Mammary epithelial cell (primary cell): ENCODE measurements at regions of chr10 and their contacts with region 1.

Region 1: DNA sequence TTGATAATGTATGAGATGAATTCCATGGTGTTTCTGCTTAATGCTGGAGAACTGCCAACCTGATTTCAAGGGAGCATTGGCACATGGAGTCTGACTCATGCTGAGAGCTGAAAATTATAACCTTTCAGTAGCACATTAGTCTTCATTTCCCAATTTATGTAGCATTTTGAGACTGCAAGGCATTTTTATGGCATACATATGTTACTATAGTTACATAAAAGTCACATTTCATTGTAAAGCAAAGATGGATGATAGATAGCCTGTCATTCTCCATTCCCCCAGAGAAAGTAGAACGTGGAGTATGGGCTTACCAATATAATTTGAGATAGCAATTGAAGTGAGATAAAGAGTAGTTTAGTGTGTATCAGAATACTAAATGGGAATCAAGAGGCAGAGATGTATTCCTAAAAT is 103.1 kb downstream of the SLC16A9 start:
- DNase-seq: peak; percentile 28
- H3K4me3 ChIP-seq: no peak overlapping the region
- H3K27ac ChIP-seq: no peak overlapping the region
- H3K4me1 ChIP-seq: no peaks in the 10 kb centered on the region
- H3K27me3 ChIP-seq: no peaks in the 10 kb centered on the region
- CTCF ChIP-seq: no peak

Region 2: DNA sequence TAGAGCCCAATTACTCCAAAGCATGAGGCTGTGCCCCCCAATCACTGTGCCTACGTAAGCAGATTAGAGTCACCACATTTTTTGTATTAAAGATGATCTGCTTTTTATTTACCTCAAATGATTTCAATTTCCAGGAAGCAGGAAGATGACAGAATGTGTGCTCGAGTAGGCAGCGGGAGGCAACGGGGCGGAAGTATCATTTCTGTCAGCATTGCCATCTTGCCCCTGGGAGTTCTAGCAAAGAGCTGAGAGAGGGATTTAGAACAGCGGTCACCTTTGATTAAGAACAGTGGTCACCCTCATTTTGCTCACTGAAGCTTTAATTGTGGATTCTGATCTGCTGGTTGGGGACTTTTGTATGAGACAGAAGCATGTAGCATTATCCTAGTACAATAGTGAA is 127.1 kb before region 1 on chr10:
- CTCF ChIA-PET with region 1: no interaction called
- dilution Hi-C with region 1: no loop called
- in situ Hi-C with region 1: no loop called
- intact Hi-C with region 1: loop called (anchors 5 kb)
- DNase-seq: no peak
- H3K4me3 ChIP-seq: no peak overlapping the region
- H3K27ac ChIP-seq: no peak overlapping the region
- H3K4me1 ChIP-seq: no peaks in the 10 kb centered on the region
- H3K27me3 ChIP-seq: no peaks in the 10 kb centered on the region
- CTCF ChIP-seq: no peak

Region 3: DNA sequence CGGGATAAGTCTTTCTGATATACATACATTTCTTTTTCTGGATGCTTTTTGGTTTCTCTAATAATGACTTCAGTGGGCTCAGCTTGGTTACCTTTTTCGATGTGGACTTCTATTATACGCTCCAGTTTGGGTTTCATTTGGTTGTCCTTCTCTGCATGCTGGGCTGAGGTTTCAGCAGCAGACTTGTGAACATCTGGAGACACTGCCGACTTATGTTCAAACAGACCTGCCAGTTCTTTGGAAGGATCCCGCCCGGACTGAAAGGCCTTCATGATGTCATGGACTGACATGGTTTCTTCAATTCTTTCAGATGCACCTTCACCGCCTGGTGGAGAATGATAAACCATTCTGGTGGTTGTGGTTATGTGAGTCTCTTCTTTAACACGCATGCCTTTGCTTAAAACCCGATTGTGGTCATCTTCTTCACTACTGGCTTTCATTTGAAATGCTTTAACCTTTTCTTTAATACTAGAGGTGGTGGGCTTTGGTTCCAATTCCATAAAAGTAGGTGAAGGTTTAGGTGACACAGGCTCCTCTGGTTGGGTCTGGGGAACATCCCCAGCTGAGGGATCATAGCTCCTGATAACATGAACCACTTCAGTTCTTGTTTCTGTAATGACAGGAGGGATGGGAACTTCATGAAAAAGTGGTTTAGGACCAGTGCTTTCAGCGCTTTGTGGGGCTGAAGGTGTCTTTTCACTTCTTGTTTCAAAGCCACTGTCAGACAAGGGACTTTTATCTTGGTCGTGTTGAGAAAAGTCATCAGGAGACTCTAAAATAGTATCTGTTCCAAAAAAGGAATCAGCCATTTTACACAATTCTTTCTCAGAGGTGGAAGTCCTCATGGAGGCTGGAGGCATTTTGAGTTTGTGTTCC is 467.5 kb after region 1 on chr10:
- CTCF ChIA-PET with region 1: no interaction called
- dilution Hi-C with region 1: loop called (anchors 25 kb)
- in situ Hi-C with region 1: no loop called
- intact Hi-C with region 1: no loop called
- DNase-seq: no peak
- H3K4me3 ChIP-seq: no peak overlapping the region
- H3K27ac ChIP-seq: no peak overlapping the region
- H3K4me1 ChIP-seq: no peaks in the 10 kb centered on the region
- H3K27me3 ChIP-seq: no peaks in the 10 kb centered on the region
- CTCF ChIP-seq: no peak